CD8-positive, alpha-beta T cell (primary cell): ENCODE measurements at regions of chr2 and their contacts with region 1.

Region 1: GRCh38 chr2:200713003-200713703 is 98.6 kb upstream of the BZW1 start:
- DNase-seq: peak; percentile 84 to 98 (median 92)
- ATAC-seq: peak; percentile 94
- H3K4me3 ChIP-seq: peak overlapping the region; percentile 5 to 25
- H3K4me3 Mint-ChIP-seq: peak overlapping the region; percentile 68
- H3K27ac ChIP-seq: peak overlapping the region; percentile 75 to 98
- H3K27ac Mint-ChIP-seq: peak overlapping the region; percentile 98
- H3K4me1 ChIP-seq: peaks cover 8% of the 10 kb centered on the region
- H3K4me1 Mint-ChIP-seq: peaks cover 11% of the 10 kb centered on the region
- H3K27me3 ChIP-seq: no peaks in the 10 kb centered on the region
- H3K27me3 Mint-ChIP-seq: peaks cover 3% of the 10 kb centered on the region
- CTCF ChIP-seq: peak; percentile 85

Region 2: DNA sequence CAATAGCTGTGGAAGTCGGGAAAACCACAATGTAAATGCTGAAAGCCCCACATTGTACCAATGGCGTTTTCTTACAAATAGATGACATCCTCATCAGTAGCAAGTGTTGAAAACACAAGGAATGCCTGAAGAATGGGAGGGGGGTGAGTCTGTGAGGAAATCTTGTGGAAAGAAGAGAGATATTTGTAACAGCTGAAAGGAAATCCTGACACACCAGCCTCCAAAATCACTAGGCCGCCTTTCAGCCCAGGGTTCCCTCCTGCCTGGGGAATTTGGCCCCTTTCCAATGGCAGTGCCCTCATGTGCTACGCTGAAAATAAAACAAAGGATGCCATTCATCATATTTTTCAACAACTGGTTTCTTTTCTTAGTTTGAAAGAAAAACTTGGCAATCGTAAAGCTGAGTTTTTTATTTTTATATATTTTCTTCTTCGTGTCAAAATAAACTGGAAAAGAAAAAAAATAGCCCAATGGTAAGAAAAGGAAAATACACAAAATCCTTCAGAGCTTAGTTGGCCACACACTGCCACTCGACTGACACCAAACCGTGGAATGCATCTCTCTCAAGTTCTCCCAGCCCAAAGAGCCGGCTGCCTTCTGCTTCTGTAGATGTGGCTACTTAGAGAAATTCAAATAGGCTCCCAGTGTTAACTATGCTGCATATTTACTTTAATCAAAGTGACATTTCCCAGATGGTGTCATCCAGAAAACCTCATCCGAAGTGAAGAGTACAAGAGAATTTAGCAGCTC is 914.1 kb before region 1 on chr2:
- CTCF ChIA-PET with region 1: no interaction called
- POLR2A ChIA-PET with region 1: no interaction called
- intact Hi-C with region 1: no loop called
- DNase-seq: no peak
- ATAC-seq: no peak
- H3K4me3 ChIP-seq: no peak overlapping the region
- H3K4me3 Mint-ChIP-seq: no peak overlapping the region
- H3K27ac ChIP-seq: no peak overlapping the region
- H3K27ac Mint-ChIP-seq: no peak overlapping the region
- H3K4me1 ChIP-seq: no peaks in the 10 kb centered on the region
- H3K4me1 Mint-ChIP-seq: no peaks in the 10 kb centered on the region
- H3K27me3 ChIP-seq: no peaks in the 10 kb centered on the region
- H3K27me3 Mint-ChIP-seq: peaks cover 5% of the 10 kb centered on the region
- CTCF ChIP-seq: no peak

Region 3: DNA sequence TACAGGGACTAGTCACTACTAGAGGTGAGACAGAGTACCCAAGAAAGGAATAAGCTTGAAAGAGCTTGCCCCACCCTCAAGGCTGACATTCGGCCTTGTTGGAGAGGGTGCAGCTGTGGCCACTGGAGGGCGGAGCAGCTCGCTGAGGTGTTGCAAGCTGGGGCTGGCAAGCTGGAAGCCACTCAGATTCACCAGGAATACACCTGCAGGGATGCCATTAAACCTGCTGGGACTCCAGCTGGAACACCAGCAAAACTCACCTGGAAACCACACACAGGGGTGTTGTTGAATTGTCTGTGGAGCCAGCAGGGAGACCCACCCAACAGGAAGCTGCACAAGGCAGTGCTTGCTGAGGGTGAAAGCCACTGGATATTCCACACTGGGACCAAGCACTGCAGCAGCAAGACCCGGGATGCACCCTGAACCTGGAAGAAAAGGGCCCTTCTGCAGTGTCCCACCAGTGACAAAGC is 229.4 kb before region 1 on chr2:
- CTCF ChIA-PET with region 1: no interaction called
- POLR2A ChIA-PET with region 1: no interaction called
- intact Hi-C with region 1: no loop called
- DNase-seq: no peak
- ATAC-seq: no peak
- H3K4me3 ChIP-seq: no peak overlapping the region
- H3K4me3 Mint-ChIP-seq: no peak overlapping the region
- H3K27ac ChIP-seq: no peak overlapping the region
- H3K27ac Mint-ChIP-seq: no peak overlapping the region
- H3K4me1 ChIP-seq: no peaks in the 10 kb centered on the region
- H3K4me1 Mint-ChIP-seq: peaks cover 3% of the 10 kb centered on the region
- H3K27me3 ChIP-seq: no peaks in the 10 kb centered on the region
- H3K27me3 Mint-ChIP-seq: peaks cover 5% of the 10 kb centered on the region
- CTCF ChIP-seq: no peak

Region 4: GRCh38 chr2:200725596-200725995 is 12.4 kb after region 1 on chr2:
- CTCF ChIA-PET with region 1: interaction called, 11 read pairs
- POLR2A ChIA-PET with region 1: interaction called, 11 read pairs
- intact Hi-C with region 1: no loop called
- DNase-seq: no peak
- ATAC-seq: no peak
- H3K4me3 ChIP-seq: no peak overlapping the region
- H3K4me3 Mint-ChIP-seq: no peak overlapping the region
- H3K27ac ChIP-seq: no peak overlapping the region
- H3K27ac Mint-ChIP-seq: no peak overlapping the region
- H3K4me1 ChIP-seq: no peaks in the 10 kb centered on the region
- H3K4me1 Mint-ChIP-seq: no peaks in the 10 kb centered on the region
- H3K27me3 ChIP-seq: no peaks in the 10 kb centered on the region
- H3K27me3 Mint-ChIP-seq: no peaks in the 10 kb centered on the region
- CTCF ChIP-seq: no peak

Region 5: GRCh38 chr2:200864176-200864976 is 151.2 kb after region 1 on chr2 and contains the start of gene CLK1:
- CTCF ChIA-PET with region 1: no interaction called
- POLR2A ChIA-PET with region 1: interaction called, 49 read pairs
- intact Hi-C with region 1: loop called (anchors 1 to 2 kb)
- DNase-seq: peak; percentile 94 to 99 (median 98)
- ATAC-seq: peak; percentile 78
- H3K4me3 ChIP-seq: peak within 1 kb of the TSS; percentile 84 to 98
- H3K4me3 Mint-ChIP-seq: peak within 1 kb of the TSS; percentile 96
- H3K27ac ChIP-seq: peak within 1 kb of the TSS; percentile 98 to 100
- H3K27ac Mint-ChIP-seq: peak within 1 kb of the TSS; percentile 100
- H3K4me1 ChIP-seq: peaks cover 29% of the 10 kb centered on the region
- H3K4me1 Mint-ChIP-seq: peaks cover 43% of the 10 kb centered on the region
- H3K27me3 ChIP-seq: no peaks in the 10 kb centered on the region
- H3K27me3 Mint-ChIP-seq: no peaks in the 10 kb centered on the region
- CTCF ChIP-seq: no peak
- total RNA-seq, gene CLK1: 1,353 to 1,404 TPM

Region 6: GRCh38 chr2:200963124-200963917 is 250.2 kb after region 1 on chr2 and contains the start of gene ORC2:
- CTCF ChIA-PET with region 1: interaction called, 3 read pairs
- POLR2A ChIA-PET with region 1: interaction called, 5 read pairs
- intact Hi-C with region 1: loop called (anchors 1 to 5 kb)
- DNase-seq: peak; percentile 84 to 96 (median 93)
- ATAC-seq: peak; percentile 94
- H3K4me3 ChIP-seq: peak within 1 kb of the TSS; percentile 70 to 90
- H3K4me3 Mint-ChIP-seq: peak within 1 kb of the TSS; percentile 99
- H3K27ac ChIP-seq: peak within 1 kb of the TSS; percentile 76 to 90
- H3K27ac Mint-ChIP-seq: peak within 1 kb of the TSS; percentile 99
- H3K4me1 ChIP-seq: peaks cover 30% of the 10 kb centered on the region
- H3K4me1 Mint-ChIP-seq: peaks cover 57% of the 10 kb centered on the region
- H3K27me3 ChIP-seq: no peaks in the 10 kb centered on the region
- H3K27me3 Mint-ChIP-seq: no peaks in the 10 kb centered on the region
- CTCF ChIP-seq: peak; percentile 51
- total RNA-seq, gene ORC2: 17.7 to 21.3 TPM

Region 7: GRCh38 chr2:201118121-201118960 is 405.2 kb after region 1 on chr2:
- CTCF ChIA-PET with region 1: interaction called, 4 read pairs
- POLR2A ChIA-PET with region 1: no interaction called
- intact Hi-C with region 1: loop called (anchors 5 kb)
- DNase-seq: peak; percentile 77 to 94 (median 89)
- ATAC-seq: peak; percentile 43
- H3K4me3 ChIP-seq: peak overlapping the region; percentile 82 to 95
- H3K4me3 Mint-ChIP-seq: peak overlapping the region; percentile 99
- H3K27ac ChIP-seq: peak overlapping the region; percentile 92
- H3K27ac Mint-ChIP-seq: peak overlapping the region; percentile 100
- H3K4me1 ChIP-seq: peaks cover 47% of the 10 kb centered on the region
- H3K4me1 Mint-ChIP-seq: peaks cover 67% of the 10 kb centered on the region
- H3K27me3 ChIP-seq: no peaks in the 10 kb centered on the region
- H3K27me3 Mint-ChIP-seq: no peaks in the 10 kb centered on the region
- CTCF ChIP-seq: peak; percentile 64

Region 8: GRCh38 chr2:201780674-201781581 is 1067.8 kb after region 1 on chr2 and contains the start of gene ALS2:
- CTCF ChIA-PET with region 1: no interaction called
- POLR2A ChIA-PET with region 1: no interaction called
- intact Hi-C with region 1: loop called in 1 of 2 experiments (anchors 2 kb)
- DNase-seq: peak; percentile 88 to 97 (median 94)
- ATAC-seq: peak; percentile 91
- H3K4me3 ChIP-seq: peak within 1 kb of the TSS; percentile 80 to 89
- H3K4me3 Mint-ChIP-seq: peak within 1 kb of the TSS; percentile 98
- H3K27ac ChIP-seq: peak within 1 kb of the TSS; percentile 94
- H3K27ac Mint-ChIP-seq: peak within 1 kb of the TSS; percentile 98
- H3K4me1 ChIP-seq: peaks cover 16% of the 10 kb centered on the region
- H3K4me1 Mint-ChIP-seq: peaks cover 27% of the 10 kb centered on the region
- H3K27me3 ChIP-seq: no peaks in the 10 kb centered on the region
- H3K27me3 Mint-ChIP-seq: peaks cover 3% of the 10 kb centered on the region
- CTCF ChIP-seq: no peak
- total RNA-seq, gene ALS2: 6.6 to 9.0 TPM